ENCODE measurements at regions of chr2 and their contacts with region 1.

Region 1: GRCh38 chr2:54680397-54681041 is 42.9 kb upstream of the EML6 start:
- DNase-seq: peak; percentile 39
- H3K4me3 Mint-ChIP-seq: peak overlapping the region; percentile 78
- H3K27ac Mint-ChIP-seq: peak overlapping the region; percentile 65
- H3K4me1 Mint-ChIP-seq: peaks cover 59% of the 10 kb centered on the region
- H3K27me3 Mint-ChIP-seq: peaks cover 33% of the 10 kb centered on the region

Region 2: DNA sequence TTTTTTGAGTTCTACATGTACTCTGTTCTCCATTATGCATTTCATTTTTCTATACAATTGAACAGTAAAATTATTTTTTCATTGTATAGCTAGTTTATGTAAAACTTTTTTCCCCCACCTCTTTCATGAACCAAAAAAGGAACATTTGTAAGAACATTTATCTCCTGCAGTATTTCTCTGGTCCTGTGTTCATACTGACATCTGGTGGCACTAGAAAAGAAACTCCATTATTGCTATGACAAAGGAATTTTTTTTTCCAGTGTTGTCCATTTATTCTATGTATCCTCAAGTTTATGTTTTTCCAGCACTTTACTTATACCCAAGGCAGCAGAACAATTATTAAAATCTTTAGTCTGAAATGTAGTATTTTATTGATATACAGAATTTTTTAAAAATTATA is 940.3 kb before region 1 on chr2:
- intact Hi-C with region 1: no loop called
- DNase-seq: no peak
- H3K4me3 Mint-ChIP-seq: no peak overlapping the region
- H3K27ac Mint-ChIP-seq: no peak overlapping the region
- H3K4me1 Mint-ChIP-seq: peaks cover 9% of the 10 kb centered on the region
- H3K27me3 Mint-ChIP-seq: no peaks in the 10 kb centered on the region

Region 3: DNA sequence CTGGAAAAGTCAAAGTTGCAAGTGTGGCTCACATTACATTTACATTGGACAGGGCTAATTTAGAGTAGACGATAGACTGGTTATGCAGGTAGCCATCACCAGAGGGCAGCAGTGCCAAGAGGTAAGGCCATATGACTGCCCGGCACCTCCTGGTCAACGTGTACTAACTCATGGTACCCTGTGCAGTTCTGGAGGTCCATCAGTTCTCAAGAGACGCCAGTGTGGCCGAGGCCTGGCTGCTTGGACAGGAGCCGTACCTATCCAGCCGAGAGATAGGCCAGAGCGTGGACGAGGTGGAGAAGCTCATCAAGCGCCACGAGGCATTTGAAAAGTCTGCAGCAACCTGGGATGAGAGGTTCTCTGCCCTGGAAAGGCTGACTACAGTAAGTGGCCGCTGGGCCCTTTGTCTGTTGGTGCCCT is 22.8 kb before region 1 on chr2:
- intact Hi-C with region 1: loop called (anchors 1 kb)
- DNase-seq: no peak
- H3K4me3 Mint-ChIP-seq: no peak overlapping the region
- H3K27ac Mint-ChIP-seq: no peak overlapping the region
- H3K4me1 Mint-ChIP-seq: peaks cover 20% of the 10 kb centered on the region
- H3K27me3 Mint-ChIP-seq: no peaks in the 10 kb centered on the region

Region 4: DNA sequence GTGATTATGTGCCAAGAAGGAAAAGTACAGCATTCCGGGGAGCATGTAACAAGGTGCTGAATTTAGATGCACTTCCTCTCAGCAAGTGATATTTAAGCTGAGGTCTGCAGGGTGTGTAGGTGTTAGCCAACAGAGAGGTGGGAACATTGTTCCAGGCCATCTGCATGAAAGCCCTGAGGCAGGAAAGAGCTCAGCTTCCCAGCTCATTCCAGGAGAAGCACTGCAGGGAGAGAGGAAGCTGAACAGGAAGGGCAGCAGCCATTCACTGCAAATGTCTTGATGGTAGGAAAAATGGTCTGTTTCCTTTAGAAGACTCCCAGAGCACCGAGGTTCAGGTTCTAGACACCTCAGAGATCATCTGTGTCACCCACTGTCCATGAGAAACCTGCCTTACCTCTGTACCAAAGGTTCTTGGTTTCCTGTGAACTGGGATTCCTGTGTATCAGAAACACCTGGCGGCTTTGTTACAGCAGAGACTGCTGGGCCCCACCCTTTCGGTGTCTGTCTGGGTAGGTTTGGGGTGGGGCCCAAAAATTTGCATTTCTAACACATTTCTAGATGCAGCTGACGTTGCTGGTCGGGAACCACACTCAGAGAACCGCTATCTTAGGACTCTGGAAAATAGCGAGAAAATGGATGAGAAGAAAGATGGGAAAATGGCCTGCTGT is 285.8 kb after region 1 on chr2:
- intact Hi-C with region 1: no loop called
- DNase-seq: no peak
- H3K4me3 Mint-ChIP-seq: no peak overlapping the region
- H3K27ac Mint-ChIP-seq: no peak overlapping the region
- H3K4me1 Mint-ChIP-seq: peaks cover 27% of the 10 kb centered on the region
- H3K27me3 Mint-ChIP-seq: no peaks in the 10 kb centered on the region

Measured in activated T-helper 1 cell treated with anti-CD3 and anti-CD28 coated beads, Interleukin-12 subunit alpha, Interleukin-12 subunit beta, Interleukin-2, Interleukin-4 antibody, amounts not matched to agents 30 ng/mL and 10 ng/mL and 1 ng/mL, durations not matched to agents 14 hours and 24 hours and 36 hours (primary cell).